Common myeloid progenitor, CD34-positive (primary cell): ENCODE measurements at regions of chr2 and their contacts with region 1.

Region 1: DNA sequence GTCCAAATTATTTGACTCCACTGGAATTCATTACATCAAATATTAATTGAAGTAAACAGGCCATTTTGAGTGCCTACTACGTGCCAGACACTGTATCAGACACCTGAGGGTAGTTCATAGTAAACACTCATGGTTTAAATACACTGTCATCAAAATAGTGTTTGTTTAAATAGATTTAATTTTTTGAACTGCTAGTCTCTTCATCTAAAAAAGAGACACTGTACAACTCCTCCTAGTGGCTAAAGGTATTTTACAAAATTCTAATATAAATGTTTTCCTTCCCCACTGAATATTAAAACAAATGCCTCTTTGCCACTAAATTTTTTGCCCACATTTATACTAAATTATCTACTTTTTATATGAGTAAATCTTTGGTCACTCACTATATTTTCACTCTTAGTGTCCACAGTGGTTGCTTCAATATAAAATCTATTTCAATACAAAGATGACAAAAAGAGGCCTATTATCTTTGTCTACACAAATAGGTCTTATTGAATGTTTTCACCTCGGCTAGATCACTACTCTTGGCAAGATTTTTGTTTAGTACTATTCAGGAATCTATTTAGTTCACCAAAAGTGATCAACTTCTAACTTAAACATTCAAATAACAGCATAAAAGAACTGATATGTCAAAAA is 122.1 kb downstream of the TMEM247 start:
- DNase-seq: peak; percentile 14 to 55 (median 43)
- H3K4me3 ChIP-seq: no peak overlapping the region
- H3K27ac ChIP-seq: no peak overlapping the region
- H3K4me1 ChIP-seq: no peaks in the 10 kb centered on the region
- H3K27me3 ChIP-seq: no peaks in the 10 kb centered on the region

Region 2: DNA sequence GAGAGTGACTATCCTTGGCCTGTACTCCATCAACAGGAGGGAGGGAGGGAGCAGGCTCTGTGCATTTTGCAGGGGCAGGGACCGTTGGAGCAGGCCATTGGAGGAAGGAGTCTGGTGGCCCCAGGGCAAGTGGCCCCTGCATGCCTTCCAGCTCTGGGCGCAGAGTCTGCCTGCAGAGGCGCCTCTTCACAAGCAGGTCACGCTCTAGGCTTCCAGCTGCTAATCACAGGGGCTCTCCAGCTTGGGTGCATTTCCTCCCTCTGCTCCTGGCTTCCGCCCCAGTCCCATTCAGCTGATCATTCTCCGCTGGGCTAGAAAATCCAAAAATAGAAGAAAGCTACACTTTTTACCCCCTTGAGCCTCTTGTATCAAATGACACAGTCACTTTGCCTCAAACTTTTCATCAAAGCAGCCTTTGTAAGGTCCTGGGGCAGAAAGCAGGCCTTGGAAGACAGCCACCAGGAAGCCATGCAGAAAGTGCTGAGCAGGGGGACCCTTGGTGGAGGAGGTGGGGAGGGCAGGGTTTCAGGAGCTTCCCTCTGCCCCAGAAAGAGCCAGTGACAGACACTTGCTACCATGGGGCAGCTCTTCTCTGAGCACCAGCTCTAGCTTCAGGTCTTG is 110.8 kb before region 1 on chr2:
- CTCF ChIA-PET with region 1: interaction called, 15 read pairs
- POLR2A ChIA-PET with region 1: no interaction called
- DNase-seq: peak; percentile 45 to 93 (median 90)
- H3K4me3 ChIP-seq: peak overlapping the region in 3 of 7 experiments; percentile 12 to 35 (median 14)
- H3K27ac ChIP-seq: no peak overlapping the region
- H3K4me1 ChIP-seq: peaks cover 4 to 27% (median 24%) of the 10 kb centered on the region in 4 experiments
- H3K27me3 ChIP-seq: no peaks in the 10 kb centered on the region

Region 3: DNA sequence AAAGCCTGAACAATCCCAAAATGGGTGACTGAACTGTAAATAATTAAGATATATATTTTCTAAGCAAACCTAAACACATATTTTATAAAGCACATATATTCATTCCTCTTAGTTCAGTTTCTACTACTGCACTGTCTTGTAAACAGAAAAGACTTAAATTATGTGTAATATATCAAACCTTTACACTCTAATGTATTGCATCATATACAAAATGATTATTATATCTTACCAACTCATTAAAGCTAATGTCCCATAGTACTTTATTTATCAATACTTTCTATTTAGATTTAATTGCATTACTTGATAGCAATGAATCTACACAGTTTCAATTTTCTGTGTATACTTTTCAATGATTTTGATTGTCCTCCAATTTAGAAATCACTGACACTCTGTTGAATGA is 11.1 kb before region 1 on chr2:
- CTCF ChIA-PET with region 1: interaction called, 16 read pairs
- POLR2A ChIA-PET with region 1: no interaction called
- DNase-seq: no peak
- H3K4me3 ChIP-seq: no peak overlapping the region
- H3K27ac ChIP-seq: no peak overlapping the region
- H3K4me1 ChIP-seq: peaks cover 0 to under 1% (median 0%) of the 10 kb centered on the region in 4 experiments
- H3K27me3 ChIP-seq: no peaks in the 10 kb centered on the region

Region 4: GRCh38 chr2:46632349-46632748 is 30.9 kb after region 1 on chr2:
- CTCF ChIA-PET with region 1: no interaction called
- POLR2A ChIA-PET with region 1: no interaction called
- DNase-seq: peak; percentile 56 to 79 (median 73)
- H3K4me3 ChIP-seq: no peak overlapping the region
- H3K27ac ChIP-seq: no peak overlapping the region
- H3K4me1 ChIP-seq: peaks cover 0 to 9% (median 7%) of the 10 kb centered on the region in 4 experiments
- H3K27me3 ChIP-seq: no peaks in the 10 kb centered on the region